Activated B cell treated with CpG ODN at 0.5 μM for 24 hours (primary cell): ENCODE measurements at regions of chr15 and their contacts with region 1.

Region 1: DNA sequence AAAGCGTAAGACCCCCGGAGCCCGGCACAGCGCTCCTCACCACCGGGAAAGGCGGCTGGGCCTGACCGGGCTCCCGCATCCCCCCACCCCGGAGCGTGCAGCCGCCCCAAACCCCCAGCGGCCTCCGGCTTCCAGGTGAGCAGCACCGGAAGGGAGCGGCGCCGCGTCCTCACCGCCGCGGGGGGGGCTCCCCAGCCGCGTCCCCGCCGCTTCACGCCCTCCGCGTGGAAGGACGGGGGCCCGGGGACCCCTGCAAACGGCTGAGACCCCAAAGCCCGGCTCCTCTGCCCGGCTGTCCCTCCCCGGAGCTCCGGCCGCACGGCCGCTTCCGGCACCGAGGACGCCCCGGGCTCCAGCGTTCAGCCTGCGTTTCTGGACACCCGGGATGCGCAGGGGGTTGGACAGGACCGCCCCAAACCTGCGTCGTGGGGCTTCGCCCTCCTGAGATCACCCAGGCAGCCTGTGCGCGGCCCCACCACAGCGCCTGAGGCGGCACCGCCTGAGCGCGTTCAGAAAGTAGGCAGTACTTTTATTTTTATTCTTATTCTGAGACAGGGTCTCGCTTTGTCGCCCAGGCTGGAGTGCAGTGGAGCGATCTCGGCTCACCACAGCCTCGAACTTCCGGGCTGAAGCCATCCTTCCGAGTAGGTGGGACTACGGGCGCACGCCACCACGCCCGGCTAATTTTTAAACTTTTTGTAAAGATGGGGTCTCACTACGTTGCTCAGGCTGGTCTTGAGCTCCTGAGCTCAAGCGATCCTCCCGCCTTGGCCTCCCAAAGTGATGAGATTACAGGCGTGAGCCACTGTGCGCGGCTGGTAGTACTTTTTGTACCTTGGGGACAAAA is 51.6 kb upstream of the BLM start:
- DNase-seq: peak; percentile 62
- ATAC-seq: peak; percentile 90
- H3K4me3 Mint-ChIP-seq: peak overlapping the region; percentile 85
- H3K27ac Mint-ChIP-seq: peak overlapping the region; percentile 84
- H3K4me1 Mint-ChIP-seq: peaks cover 55% of the 10 kb centered on the region
- H3K27me3 Mint-ChIP-seq: peaks cover 13% of the 10 kb centered on the region
- CTCF ChIP-seq: no peak

Region 2: DNA sequence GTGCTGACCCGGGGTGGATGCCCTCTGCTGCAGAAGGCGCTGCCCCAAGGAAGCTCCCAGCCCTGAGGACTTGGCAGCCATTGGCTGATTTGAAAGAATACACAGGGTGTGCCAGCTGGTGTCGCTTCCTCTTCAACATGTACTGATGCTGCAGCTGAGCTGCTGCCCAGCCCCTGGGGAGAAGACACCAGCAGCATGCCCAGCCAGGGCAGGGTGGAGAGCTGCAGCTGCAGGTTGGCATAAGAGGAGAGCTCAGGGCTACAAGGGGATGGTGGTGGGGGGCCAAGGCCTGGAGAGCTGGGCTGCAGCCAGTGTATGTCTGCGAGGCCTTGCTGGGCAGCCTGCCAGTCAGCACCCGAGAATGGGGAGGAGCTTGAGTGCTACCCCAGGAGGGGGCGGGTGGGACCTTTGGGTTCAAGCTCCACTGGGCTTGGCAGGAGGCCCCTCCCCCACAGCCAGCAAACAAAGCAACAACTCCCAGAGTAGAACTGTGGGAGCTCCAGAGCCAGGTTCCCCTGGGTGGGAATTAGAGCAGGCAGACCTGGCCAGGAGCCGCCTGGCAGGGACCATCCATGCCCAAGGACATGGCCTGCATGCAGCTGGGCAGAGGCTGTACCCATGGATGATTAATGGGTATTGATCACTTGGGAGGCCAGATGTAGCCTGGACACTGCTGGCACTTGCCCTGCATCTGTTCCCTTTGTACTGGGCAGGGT is 473.6 kb before region 1 on chr15:
- CTCF ChIA-PET with region 1: no interaction called
- POLR2A ChIA-PET with region 1: no interaction called
- intact Hi-C with region 1: loop called (anchors 10 kb)
- DNase-seq: peak; percentile 69
- ATAC-seq: peak; percentile 75
- H3K4me3 Mint-ChIP-seq: peak overlapping the region; percentile 77
- H3K27ac Mint-ChIP-seq: peak overlapping the region; percentile 98
- H3K4me1 Mint-ChIP-seq: peaks cover 97% of the 10 kb centered on the region
- H3K27me3 Mint-ChIP-seq: no peaks in the 10 kb centered on the region
- CTCF ChIP-seq: no peak

Region 3: DNA sequence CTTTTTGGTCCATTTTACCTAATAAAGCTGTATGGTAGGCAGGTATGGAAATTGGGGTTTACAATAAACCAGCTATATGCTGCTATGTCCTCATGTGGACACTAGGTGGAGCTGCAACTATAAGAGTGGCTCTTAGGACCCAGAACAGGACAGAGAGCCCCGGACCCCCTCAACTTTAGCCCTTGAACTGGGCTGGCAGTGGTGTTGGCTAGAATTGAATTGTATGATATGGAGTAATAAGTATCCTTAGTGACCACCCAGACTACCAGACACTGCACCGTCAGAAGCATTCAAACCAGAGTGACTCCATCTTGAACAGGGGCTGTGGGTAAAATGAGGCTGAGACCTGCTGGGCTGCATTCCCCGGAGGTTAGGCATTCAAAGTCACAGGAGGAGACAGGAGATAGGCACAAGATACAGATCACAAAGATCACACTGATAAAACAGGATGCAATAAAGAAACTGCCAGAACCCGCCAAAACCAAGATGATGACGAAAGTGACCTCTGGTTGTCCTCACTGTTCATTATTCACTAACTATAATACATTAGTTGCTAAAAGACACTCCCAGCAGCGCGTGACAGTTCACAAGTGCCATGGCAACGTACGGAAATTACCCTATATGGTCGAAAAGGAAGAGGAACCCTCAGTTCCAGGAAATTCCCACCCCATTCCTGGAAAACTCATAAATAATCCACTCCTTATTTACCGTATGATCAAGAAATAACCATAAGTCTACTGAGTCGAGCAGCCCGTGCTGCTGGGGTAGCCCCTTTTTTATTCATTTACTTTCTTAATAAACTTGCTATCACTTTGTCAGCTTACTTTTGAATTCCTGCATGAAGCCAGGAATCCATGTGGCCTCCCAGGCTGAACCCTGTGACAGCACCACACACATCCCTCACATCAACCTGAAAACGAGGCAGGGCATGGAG is 17.1 kb before region 1 on chr15:
- CTCF ChIA-PET with region 1: interaction called, 7 read pairs
- POLR2A ChIA-PET with region 1: interaction called, 13 read pairs
- intact Hi-C with region 1: loop called (anchors 1 kb)
- DNase-seq: no peak
- ATAC-seq: peak; percentile 93
- H3K4me3 Mint-ChIP-seq: peak overlapping the region; percentile 39
- H3K27ac Mint-ChIP-seq: peak overlapping the region; percentile 43
- H3K4me1 Mint-ChIP-seq: peaks cover 7% of the 10 kb centered on the region
- H3K27me3 Mint-ChIP-seq: peaks cover 4% of the 10 kb centered on the region
- CTCF ChIP-seq: no peak

Region 4: GRCh38 chr15:90677807-90678790 is 12.6 kb after region 1 on chr15:
- CTCF ChIA-PET with region 1: no interaction called
- POLR2A ChIA-PET with region 1: interaction called, 11 read pairs
- intact Hi-C with region 1: no loop called
- DNase-seq: no peak
- ATAC-seq: no peak
- H3K4me3 Mint-ChIP-seq: no peak overlapping the region
- H3K27ac Mint-ChIP-seq: no peak overlapping the region
- H3K4me1 Mint-ChIP-seq: peaks cover 12% of the 10 kb centered on the region
- H3K27me3 Mint-ChIP-seq: peaks cover 6% of the 10 kb centered on the region
- CTCF ChIP-seq: no peak

Region 5: GRCh38 chr15:90686435-90687218 is 21.1 kb after region 1 on chr15:
- CTCF ChIA-PET with region 1: no interaction called
- POLR2A ChIA-PET with region 1: interaction called, 6 read pairs
- intact Hi-C with region 1: loop called (anchors 1 kb)
- DNase-seq: no peak
- ATAC-seq: peak; percentile 79
- H3K4me3 Mint-ChIP-seq: no peak overlapping the region
- H3K27ac Mint-ChIP-seq: peak overlapping the region; percentile 67
- H3K4me1 Mint-ChIP-seq: peaks cover 25% of the 10 kb centered on the region
- H3K27me3 Mint-ChIP-seq: peaks cover 2% of the 10 kb centered on the region
- CTCF ChIP-seq: no peak

Region 6: DNA sequence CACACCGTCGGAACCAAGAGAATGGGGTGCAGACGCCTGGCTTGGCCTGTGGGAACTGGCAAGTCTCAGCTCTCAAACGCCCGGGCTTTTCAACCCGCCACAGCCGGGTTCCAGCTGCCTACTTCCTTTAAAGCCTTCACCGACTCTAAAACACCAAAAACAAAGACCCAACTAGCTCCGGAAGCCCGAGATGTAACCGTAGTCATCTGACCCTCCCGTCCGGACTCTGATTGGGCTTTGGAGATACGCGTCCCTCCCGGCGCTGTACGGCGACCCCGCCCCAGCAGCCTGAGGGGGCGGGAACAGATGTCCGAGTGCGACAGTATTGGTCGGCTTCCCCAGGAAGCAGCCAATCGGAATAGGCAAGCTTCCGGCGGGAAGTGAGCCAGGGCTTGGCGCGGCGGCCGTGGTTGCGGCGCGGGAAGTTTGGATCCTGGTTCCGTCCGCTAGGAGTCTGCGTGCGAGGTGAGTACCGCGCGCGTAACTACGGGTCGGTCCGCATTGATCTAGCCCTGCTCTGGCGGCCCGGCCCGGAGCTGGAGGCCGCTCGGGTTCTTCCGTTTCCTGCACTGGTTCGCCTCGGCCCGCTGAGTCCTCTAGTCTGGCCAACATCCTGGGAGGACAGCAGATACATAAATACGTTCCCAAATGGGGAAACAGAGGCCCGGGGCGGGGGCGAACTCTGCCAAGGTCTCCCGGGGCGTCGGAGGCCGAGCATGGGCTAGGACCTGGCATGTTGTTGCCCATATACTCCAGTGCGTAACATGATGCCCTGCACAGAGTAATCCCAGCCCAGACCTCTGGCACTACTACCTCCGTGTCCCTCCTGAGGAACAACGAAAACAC is 51.7 kb after region 1 on chr15 and contains the start of gene BLM:
- CTCF ChIA-PET with region 1: no interaction called
- POLR2A ChIA-PET with region 1: interaction called, 10 read pairs
- intact Hi-C with region 1: loop called (anchors 1 kb)
- DNase-seq: peak; percentile 87
- ATAC-seq: peak; percentile 99
- H3K4me3 Mint-ChIP-seq: peak within 1 kb of the TSS; percentile 96
- H3K27ac Mint-ChIP-seq: peak within 1 kb of the TSS; percentile 94
- H3K4me1 Mint-ChIP-seq: peaks cover 30% of the 10 kb centered on the region
- H3K27me3 Mint-ChIP-seq: no peaks in the 10 kb centered on the region
- CTCF ChIP-seq: no peak
- total RNA-seq, gene BLM: 18.2 and 23.4 TPM in 2 replicates

Region 7: GRCh38 chr15:90789462-90789861 is 124.0 kb after region 1 on chr15:
- CTCF ChIA-PET with region 1: no interaction called
- POLR2A ChIA-PET with region 1: no interaction called
- intact Hi-C with region 1: loop called (anchors 5 kb)
- DNase-seq: no peak
- ATAC-seq: no peak
- H3K4me3 Mint-ChIP-seq: no peak overlapping the region
- H3K27ac Mint-ChIP-seq: no peak overlapping the region
- H3K4me1 Mint-ChIP-seq: peaks cover 18% of the 10 kb centered on the region
- H3K27me3 Mint-ChIP-seq: no peaks in the 10 kb centered on the region
- CTCF ChIP-seq: no peak